HepG2 (cell line): ENCODE measurements at regions of chr4 and their contacts with region 1.

Region 1: GRCh38 chr4:127400731-127401346 is 231.9 kb upstream of the INTU start:
- DNase-seq: peak; percentile 66
- ATAC-seq: peak; percentile 91
- H3K4me3 ChIP-seq: no peak overlapping the region
- H3K27ac ChIP-seq: no peak overlapping the region
- H3K4me1 ChIP-seq: no peaks in the 10 kb centered on the region
- H3K27me3 ChIP-seq: no peaks in the 10 kb centered on the region
- CTCF ChIP-seq: peak; percentile 83
- EP300 ChIP-seq: no peak
- POLR2A ChIP-seq: no peak
- RAD21 ChIP-seq: no peak; the same call in 1 of the 2 replicates

Region 2: GRCh38 chr4:125762537-125762936 is 1638.3 kb before region 1 on chr4:
- CTCF ChIA-PET with region 1: no interaction called
- POLR2A ChIA-PET with region 1: no interaction called
- in situ Hi-C with region 1: no loop called
- intact Hi-C with region 1: loop called (anchors 5 kb)
- DNase-seq: no peak
- ATAC-seq: peak; percentile 33; the same call in 1 of the 3 replicates
- H3K4me3 ChIP-seq: no peak overlapping the region
- H3K27ac ChIP-seq: no peak overlapping the region
- H3K4me1 ChIP-seq: no peaks in the 10 kb centered on the region
- H3K27me3 ChIP-seq: no peaks in the 10 kb centered on the region
- CTCF ChIP-seq: no peak
- EP300 ChIP-seq: no peak
- POLR2A ChIP-seq: no peak
- RAD21 ChIP-seq: no peak

Region 3: GRCh38 chr4:126106658-126107057 is 1294.2 kb before region 1 on chr4:
- CTCF ChIA-PET with region 1: no interaction called
- POLR2A ChIA-PET with region 1: no interaction called
- in situ Hi-C with region 1: no loop called
- intact Hi-C with region 1: loop called (anchors 10 kb)
- DNase-seq: peak; percentile 16
- ATAC-seq: peak; percentile 41; the same call in 2 of the 3 replicates
- H3K4me3 ChIP-seq: no peak overlapping the region
- H3K27ac ChIP-seq: no peak overlapping the region
- H3K4me1 ChIP-seq: no peaks in the 10 kb centered on the region
- H3K27me3 ChIP-seq: no peaks in the 10 kb centered on the region
- CTCF ChIP-seq: no peak
- EP300 ChIP-seq: no peak
- POLR2A ChIP-seq: no peak
- RAD21 ChIP-seq: no peak

Region 4: DNA sequence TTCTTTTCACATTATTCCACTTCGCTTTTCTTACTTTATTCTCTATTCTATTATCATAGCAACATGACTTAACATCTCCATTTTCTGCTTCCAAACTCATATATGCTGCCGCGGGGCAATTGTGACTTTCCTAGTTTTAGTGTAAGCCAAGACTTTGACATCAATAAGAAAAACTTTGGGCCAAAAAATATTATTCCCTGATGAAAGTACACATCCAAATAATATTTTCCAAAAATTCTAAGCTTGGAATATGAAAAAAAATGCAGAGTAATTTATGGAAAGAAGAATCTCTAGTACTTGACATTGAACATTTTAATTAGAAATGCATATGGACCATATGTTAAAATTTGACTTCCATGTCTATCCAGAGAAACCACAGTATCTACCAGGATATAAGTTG is 763.1 kb before region 1 on chr4:
- CTCF ChIA-PET with region 1: no interaction called
- POLR2A ChIA-PET with region 1: no interaction called
- in situ Hi-C with region 1: no loop called
- intact Hi-C with region 1: no loop called
- DNase-seq: no peak
- ATAC-seq: no peak
- H3K4me3 ChIP-seq: no peak overlapping the region
- H3K27ac ChIP-seq: no peak overlapping the region
- H3K4me1 ChIP-seq: no peaks in the 10 kb centered on the region
- H3K27me3 ChIP-seq: no peaks in the 10 kb centered on the region
- CTCF ChIP-seq: no peak
- EP300 ChIP-seq: no peak
- POLR2A ChIP-seq: no peak
- RAD21 ChIP-seq: no peak